GM12878 (cell line): ENCODE measurements at regions of chr2 and their contacts with region 1.

Region 1: GRCh38 chr2:195575879-195576401 is 81.1 kb upstream of the SLC39A10 start:
- DNase-seq: no peak
- ATAC-seq: peak; percentile 87
- H3K4me3 ChIP-seq: no peak overlapping the region
- H3K27ac ChIP-seq: no peak overlapping the region
- H3K4me1 ChIP-seq: no peaks in the 10 kb centered on the region; the same call in 1 of the 2 replicates
- H3K27me3 ChIP-seq: no peaks in the 10 kb centered on the region
- CTCF ChIP-seq: peak in 2 of 3 experiments; percentile 12 to 60; a peak in 3 of 6 replicates
- EP300 ChIP-seq: no peak
- POLR2A ChIP-seq: no peak
- RAD21 ChIP-seq: peak; percentile 54

Region 2: GRCh38 chr2:195181059-195181705 is 394.8 kb before region 1 on chr2:
- CTCF ChIA-PET with region 1: no interaction called
- POLR2A ChIA-PET with region 1: no interaction called
- RAD21 ChIA-PET with region 1: no interaction called
- SMC1A ChIA-PET with region 1: no interaction called
- in situ Hi-C with region 1: no loop called
- intact Hi-C with region 1: no loop called
- DNase-seq: no peak
- ATAC-seq: no peak
- H3K4me3 ChIP-seq: no peak overlapping the region
- H3K27ac ChIP-seq: no peak overlapping the region
- H3K4me1 ChIP-seq: no peaks in the 10 kb centered on the region
- H3K27me3 ChIP-seq: no peaks in the 10 kb centered on the region
- CTCF ChIP-seq: no peak
- EP300 ChIP-seq: no peak
- POLR2A ChIP-seq: no peak
- RAD21 ChIP-seq: no peak

Region 3: DNA sequence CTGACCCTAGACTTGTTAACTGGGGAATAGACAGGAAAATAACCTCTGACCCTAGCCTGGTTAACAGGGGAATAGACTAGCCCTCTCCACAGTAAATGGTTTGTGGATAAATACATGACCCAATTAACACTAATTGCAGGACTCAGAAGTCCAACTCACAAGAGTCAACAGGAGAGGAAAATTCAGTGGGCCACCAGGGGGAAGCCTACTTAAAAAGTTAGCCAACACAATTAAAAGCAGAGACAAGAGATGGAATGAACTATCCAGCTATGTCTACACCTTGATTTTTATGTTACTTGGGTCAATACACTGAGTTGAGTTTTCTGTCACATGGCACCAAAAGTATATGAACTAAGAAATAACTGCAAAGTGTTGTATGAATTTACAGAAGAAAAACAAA is 77.8 kb before region 1 on chr2:
- CTCF ChIA-PET with region 1: interaction called, 72 read pairs
- POLR2A ChIA-PET with region 1: no interaction called
- RAD21 ChIA-PET with region 1: interaction called, 47 read pairs
- SMC1A ChIA-PET with region 1: interaction called, 91 read pairs
- in situ Hi-C with region 1: no loop called
- intact Hi-C with region 1: no loop called
- DNase-seq: no peak
- ATAC-seq: peak; percentile 78
- H3K4me3 ChIP-seq: no peak overlapping the region
- H3K27ac ChIP-seq: no peak overlapping the region
- H3K4me1 ChIP-seq: no peaks in the 10 kb centered on the region
- H3K27me3 ChIP-seq: no peaks in the 10 kb centered on the region
- CTCF ChIP-seq: peak; percentile 33 to 56 (median 44)
- EP300 ChIP-seq: no peak
- POLR2A ChIP-seq: no peak
- RAD21 ChIP-seq: peak; percentile 70

Region 4: DNA sequence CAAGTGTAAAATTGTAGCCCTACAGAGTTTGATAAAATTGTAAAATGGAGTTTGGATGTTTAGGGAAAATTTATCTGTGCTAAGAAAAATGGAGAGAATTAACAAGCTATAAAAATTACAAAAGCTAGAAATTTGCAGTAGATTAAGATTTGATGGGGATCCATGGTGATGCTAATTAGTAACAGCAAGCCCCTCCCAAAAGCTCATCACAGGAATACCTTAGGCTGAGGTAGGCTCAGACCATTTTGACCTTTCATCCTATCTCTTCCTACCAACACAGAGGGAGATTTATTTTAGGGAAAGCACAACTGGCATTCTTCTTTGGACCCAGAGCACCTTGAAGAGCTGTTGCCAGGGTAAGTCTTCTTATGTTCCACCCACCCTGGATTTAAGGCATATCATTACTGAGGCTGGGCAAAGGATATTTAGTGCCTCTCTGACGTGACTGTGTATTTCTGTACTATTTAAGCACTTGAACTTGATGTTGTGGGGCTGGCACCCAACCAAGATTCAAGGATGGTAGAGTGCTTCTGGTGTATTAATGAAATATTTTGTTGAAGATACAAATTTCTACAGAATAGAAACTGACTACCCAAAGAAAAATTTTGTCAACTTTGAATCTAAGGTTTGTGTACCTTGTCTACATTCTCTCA is 10.2 kb after region 1 on chr2:
- CTCF ChIA-PET with region 1: interaction called, 25 read pairs
- POLR2A ChIA-PET with region 1: no interaction called
- RAD21 ChIA-PET with region 1: interaction called, 5 read pairs
- SMC1A ChIA-PET with region 1: interaction called, 17 read pairs
- in situ Hi-C with region 1: no loop called
- intact Hi-C with region 1: no loop called
- DNase-seq: no peak
- ATAC-seq: no peak
- H3K4me3 ChIP-seq: no peak overlapping the region
- H3K27ac ChIP-seq: no peak overlapping the region
- H3K4me1 ChIP-seq: no peaks in the 10 kb centered on the region
- H3K27me3 ChIP-seq: no peaks in the 10 kb centered on the region
- CTCF ChIP-seq: no peak
- EP300 ChIP-seq: no peak
- POLR2A ChIP-seq: no peak
- RAD21 ChIP-seq: no peak

Region 5: DNA sequence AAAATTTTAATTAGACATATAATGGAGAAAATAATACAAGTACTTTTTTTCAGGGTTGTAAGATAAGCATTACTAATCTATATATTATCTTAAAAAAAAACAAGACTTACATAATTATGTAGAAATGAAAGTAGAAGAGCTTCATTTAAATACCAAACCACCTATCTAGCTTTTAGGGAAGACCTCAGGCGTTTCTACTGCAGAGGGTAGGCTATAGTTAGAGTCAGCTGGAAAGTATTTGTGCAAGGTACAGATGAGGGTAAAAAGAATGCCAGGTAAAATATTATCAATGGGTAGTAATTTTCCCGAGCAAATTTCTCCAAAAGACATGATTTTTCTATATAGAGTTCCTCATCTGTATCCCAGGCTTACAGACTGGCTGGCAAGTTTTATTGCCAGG is 50.6 kb after region 1 on chr2:
- CTCF ChIA-PET with region 1: interaction called, 12 read pairs
- POLR2A ChIA-PET with region 1: no interaction called
- RAD21 ChIA-PET with region 1: interaction called, 4 read pairs
- SMC1A ChIA-PET with region 1: interaction called, 7 read pairs
- in situ Hi-C with region 1: no loop called
- intact Hi-C with region 1: no loop called
- DNase-seq: no peak
- ATAC-seq: no peak
- H3K4me3 ChIP-seq: no peak overlapping the region
- H3K27ac ChIP-seq: no peak overlapping the region
- H3K4me1 ChIP-seq: no peaks in the 10 kb centered on the region
- H3K27me3 ChIP-seq: no peaks in the 10 kb centered on the region
- CTCF ChIP-seq: no peak
- EP300 ChIP-seq: no peak
- POLR2A ChIP-seq: no peak
- RAD21 ChIP-seq: no peak

Region 6: GRCh38 chr2:195664528-195664927 is 88.6 kb after region 1 on chr2:
- CTCF ChIA-PET with region 1: interaction called, 221 read pairs
- POLR2A ChIA-PET with region 1: interaction called, 15 read pairs
- RAD21 ChIA-PET with region 1: interaction called, 264 read pairs
- SMC1A ChIA-PET with region 1: interaction called, 244 read pairs
- in situ Hi-C with region 1: no loop called
- intact Hi-C with region 1: loop called (anchors 1 kb)
- DNase-seq: no peak
- ATAC-seq: no peak
- H3K4me3 ChIP-seq: no peak overlapping the region
- H3K27ac ChIP-seq: no peak overlapping the region
- H3K4me1 ChIP-seq: no peaks in the 10 kb centered on the region
- H3K27me3 ChIP-seq: no peaks in the 10 kb centered on the region
- CTCF ChIP-seq: no peak; a peak in 1 of 6 replicates
- EP300 ChIP-seq: no peak
- POLR2A ChIP-seq: no peak
- RAD21 ChIP-seq: peak; percentile 45; the same call in 1 of the 2 replicates

Region 7: GRCh38 chr2:195741191-195741590 is 165.3 kb after region 1 on chr2:
- CTCF ChIA-PET with region 1: no interaction called
- POLR2A ChIA-PET with region 1: no interaction called
- RAD21 ChIA-PET with region 1: no interaction called
- SMC1A ChIA-PET with region 1: no interaction called
- in situ Hi-C with region 1: no loop called
- intact Hi-C with region 1: no loop called
- DNase-seq: no peak
- ATAC-seq: no peak
- H3K4me3 ChIP-seq: no peak overlapping the region
- H3K27ac ChIP-seq: no peak overlapping the region
- H3K4me1 ChIP-seq: no peaks in the 10 kb centered on the region
- H3K27me3 ChIP-seq: no peaks in the 10 kb centered on the region
- CTCF ChIP-seq: no peak
- EP300 ChIP-seq: no peak
- POLR2A ChIP-seq: no peak
- RAD21 ChIP-seq: no peak

Region 8: GRCh38 chr2:195861821-195862220 is 285.9 kb after region 1 on chr2:
- CTCF ChIA-PET with region 1: no interaction called
- POLR2A ChIA-PET with region 1: no interaction called
- RAD21 ChIA-PET with region 1: no interaction called
- SMC1A ChIA-PET with region 1: no interaction called
- in situ Hi-C with region 1: no loop called
- intact Hi-C with region 1: no loop called
- DNase-seq: no peak
- ATAC-seq: no peak
- H3K4me3 ChIP-seq: no peak overlapping the region
- H3K27ac ChIP-seq: no peak overlapping the region
- H3K4me1 ChIP-seq: no peaks in the 10 kb centered on the region
- H3K27me3 ChIP-seq: no peaks in the 10 kb centered on the region
- CTCF ChIP-seq: no peak
- EP300 ChIP-seq: no peak
- POLR2A ChIP-seq: no peak
- RAD21 ChIP-seq: no peak

Region 9: GRCh38 chr2:195937176-195937575 is 361.2 kb after region 1 on chr2:
- CTCF ChIA-PET with region 1: interaction called, 3 read pairs
- POLR2A ChIA-PET with region 1: no interaction called
- RAD21 ChIA-PET with region 1: interaction called, 5 read pairs
- SMC1A ChIA-PET with region 1: interaction called, 11 read pairs
- in situ Hi-C with region 1: no loop called
- intact Hi-C with region 1: no loop called
- DNase-seq: no peak
- ATAC-seq: no peak
- H3K4me3 ChIP-seq: no peak overlapping the region
- H3K27ac ChIP-seq: no peak overlapping the region
- H3K4me1 ChIP-seq: no peaks in the 10 kb centered on the region
- H3K27me3 ChIP-seq: no peaks in the 10 kb centered on the region
- CTCF ChIP-seq: no peak
- EP300 ChIP-seq: no peak
- POLR2A ChIP-seq: no peak
- RAD21 ChIP-seq: no peak